Breast epithelium (tissue), 4 donors: ENCODE measurements at regions of chr9 and their contacts with region 1.

Region 1: GRCh38 chr9:33436440-33436839 is 11.0 kb downstream of the AQP3 start:
- DNase-seq: no peak
- H3K4me3 ChIP-seq: no peak overlapping the region
- H3K27ac ChIP-seq: no peak overlapping the region
- H3K4me1 ChIP-seq: peaks cover 0 to 10% of the 10 kb centered on the region in 2 donors
- H3K27me3 ChIP-seq: no peaks in the 10 kb centered on the region
- CTCF ChIP-seq: no peak
- POLR2A ChIP-seq: no peak

Region 2: DNA sequence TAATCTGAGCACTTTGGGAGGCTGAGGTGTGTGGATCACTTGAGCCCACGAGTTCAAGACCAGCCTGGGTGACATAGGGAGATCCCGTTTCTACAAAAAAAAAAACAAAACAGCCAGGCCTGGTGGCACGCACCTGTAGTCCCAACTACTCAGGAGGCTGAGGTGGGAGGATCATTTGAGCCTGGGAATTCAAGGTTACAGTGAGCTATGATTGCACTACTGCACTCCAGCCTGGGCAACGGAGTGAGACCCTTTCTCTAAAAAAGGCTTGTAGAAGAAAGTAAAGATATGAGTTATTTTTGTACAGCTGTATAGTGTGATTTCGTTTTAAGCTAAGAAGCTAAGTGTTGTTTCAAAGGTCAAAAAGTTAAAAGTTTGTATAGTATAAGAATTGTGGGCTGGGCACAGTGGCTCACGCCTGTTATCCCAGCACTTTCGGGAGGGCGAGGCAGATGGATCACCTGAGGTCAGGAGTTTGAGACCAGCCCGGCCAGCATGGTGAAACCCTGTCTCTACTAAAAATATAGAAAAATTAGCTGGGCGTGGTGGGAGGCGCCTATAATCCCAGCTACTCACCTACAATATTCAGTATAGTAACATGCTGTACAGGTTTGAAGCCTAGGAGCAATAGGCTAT is 399.3 kb after region 1 on chr9:
- intact Hi-C with region 1: loop called (anchors 5 kb)
- DNase-seq: no peak
- H3K4me3 ChIP-seq: no peak overlapping the region
- H3K27ac ChIP-seq: peak overlapping the region; percentile 15 to 83
- H3K4me1 ChIP-seq: peaks cover 4% of the 10 kb centered on the region in 2 donors
- H3K27me3 ChIP-seq: no peaks in the 10 kb centered on the region
- CTCF ChIP-seq: no peak
- POLR2A ChIP-seq: no peak